ENCODE measurements at regions of chr7 and their contacts with region 1.

Region 1: DNA sequence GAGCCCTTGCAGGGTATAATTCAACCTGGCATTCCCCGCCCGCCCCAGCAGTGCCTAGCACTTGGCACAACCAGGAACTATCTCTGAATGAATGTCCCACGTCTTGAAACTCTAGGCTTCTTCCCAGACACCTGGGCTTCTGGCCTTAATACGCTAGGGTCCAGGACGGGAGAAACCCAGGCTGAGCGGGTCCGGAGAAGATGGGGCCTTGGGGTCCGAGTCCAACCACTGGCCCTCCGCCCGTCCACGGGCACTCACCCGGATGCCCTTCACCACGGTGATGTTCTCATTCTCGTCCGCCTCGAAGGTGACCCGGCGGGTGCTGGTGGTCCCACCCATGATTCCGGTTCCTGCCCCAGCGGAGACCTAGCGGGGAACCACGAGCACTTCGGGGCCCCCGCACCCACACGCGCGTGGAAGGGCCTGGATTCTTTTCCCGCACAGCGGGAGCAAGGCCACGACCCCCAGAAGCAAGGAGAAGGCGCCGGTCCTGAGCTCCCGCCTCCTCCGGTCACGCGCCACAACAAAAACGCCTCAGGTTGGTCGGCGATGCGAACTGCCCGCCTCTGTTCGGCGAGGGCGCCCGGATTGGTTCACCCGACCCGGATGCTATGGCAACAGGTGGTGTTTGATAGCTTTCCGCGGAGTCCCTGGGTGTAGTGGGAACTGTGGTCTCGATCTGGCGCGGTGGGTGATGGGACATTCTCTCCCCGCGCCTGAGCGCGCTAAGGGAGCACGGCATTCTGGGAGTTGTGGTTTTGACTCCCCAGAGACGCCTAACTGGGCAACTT is at the start of gene CHCHD3:
- DNase-seq: peak; percentile 98 to 99
- H3K4me3 ChIP-seq: peak within 1 kb of the TSS; percentile 70
- H3K4me3 Mint-ChIP-seq: peak within 1 kb of the TSS; percentile 88
- H3K27ac Mint-ChIP-seq: peak within 1 kb of the TSS; percentile 92
- H3K4me1 ChIP-seq: peaks cover 4% of the 10 kb centered on the region; the same call in 1 of the 2 replicates
- H3K4me1 Mint-ChIP-seq: no peaks in the 10 kb centered on the region
- H3K27me3 ChIP-seq: no peaks in the 10 kb centered on the region
- H3K27me3 Mint-ChIP-seq: peaks cover 5% of the 10 kb centered on the region
- CTCF ChIP-seq: no peak
- total RNA-seq, gene CHCHD3: 97.8 and 102 TPM in 2 replicates

Region 2: DNA sequence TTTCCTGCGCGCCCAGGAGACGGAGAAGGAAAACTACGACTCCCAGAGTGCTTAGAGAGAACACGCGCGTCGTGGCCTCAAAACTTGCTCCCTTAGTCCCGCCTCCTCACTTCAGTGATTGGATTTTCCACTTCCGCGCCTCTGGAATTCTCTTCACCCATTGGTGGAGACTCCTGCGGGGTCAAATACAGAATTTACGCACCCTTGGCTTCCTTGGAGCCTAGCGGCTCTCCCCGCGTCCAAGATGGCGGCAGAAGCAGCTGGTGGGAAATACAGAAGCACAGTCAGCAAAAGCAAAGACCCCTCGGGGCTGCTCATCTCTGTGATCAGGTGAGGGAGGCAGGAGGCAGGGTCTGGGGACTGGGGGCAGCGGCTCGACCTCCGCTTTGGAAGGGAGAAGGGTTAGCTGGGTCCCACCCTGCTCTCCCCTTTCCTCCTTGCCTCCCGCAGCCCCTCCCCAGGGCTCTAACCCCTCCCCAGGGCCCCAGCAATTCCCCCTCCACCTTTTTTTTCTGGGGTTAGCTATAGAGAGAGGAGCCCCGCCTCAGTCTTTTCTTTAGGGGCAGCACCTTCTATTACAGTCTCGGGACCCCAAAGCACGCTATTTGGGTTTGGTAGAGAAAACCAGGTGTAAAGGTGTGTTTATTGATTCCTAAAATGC is 171.2 kb after region 1 on chr7 and contains the start of gene EXOC4:
- CTCF ChIA-PET with region 1: no interaction called
- POLR2A ChIA-PET with region 1: interaction called, 6 read pairs
- intact Hi-C with region 1: loop called (anchors 1 kb)
- DNase-seq: peak; percentile 95
- H3K4me3 ChIP-seq: peak within 1 kb of the TSS; percentile 73
- H3K4me3 Mint-ChIP-seq: peak within 1 kb of the TSS; percentile 87
- H3K27ac Mint-ChIP-seq: peak within 1 kb of the TSS; percentile 95
- H3K4me1 ChIP-seq: no peaks in the 10 kb centered on the region; the same call in 1 of the 2 replicates
- H3K4me1 Mint-ChIP-seq: peaks cover 7% of the 10 kb centered on the region
- H3K27me3 ChIP-seq: no peaks in the 10 kb centered on the region
- H3K27me3 Mint-ChIP-seq: no peaks in the 10 kb centered on the region
- CTCF ChIP-seq: no peak
- total RNA-seq, gene EXOC4: 66.2 and 68.4 TPM in 2 replicates